Caco-2 (cell line): ENCODE measurements at regions of chr5 and their contacts with region 1.

Region 1: GRCh38 chr5:135308752-135309151 is 90.3 kb downstream of the MACROH2A1 start:
- DNase-seq: peak; percentile 91 to 95
- H3K4me3 ChIP-seq: no peak overlapping the region
- H3K4me3 Mint-ChIP-seq: peak overlapping the region; percentile 69
- H3K27ac Mint-ChIP-seq: peak overlapping the region; percentile 97
- H3K4me1 ChIP-seq: peaks cover 75% of the 10 kb centered on the region
- H3K4me1 Mint-ChIP-seq: peaks cover 76% of the 10 kb centered on the region
- H3K27me3 ChIP-seq: no peaks in the 10 kb centered on the region
- H3K27me3 Mint-ChIP-seq: no peaks in the 10 kb centered on the region
- CTCF ChIP-seq: no peak

Region 2: DNA sequence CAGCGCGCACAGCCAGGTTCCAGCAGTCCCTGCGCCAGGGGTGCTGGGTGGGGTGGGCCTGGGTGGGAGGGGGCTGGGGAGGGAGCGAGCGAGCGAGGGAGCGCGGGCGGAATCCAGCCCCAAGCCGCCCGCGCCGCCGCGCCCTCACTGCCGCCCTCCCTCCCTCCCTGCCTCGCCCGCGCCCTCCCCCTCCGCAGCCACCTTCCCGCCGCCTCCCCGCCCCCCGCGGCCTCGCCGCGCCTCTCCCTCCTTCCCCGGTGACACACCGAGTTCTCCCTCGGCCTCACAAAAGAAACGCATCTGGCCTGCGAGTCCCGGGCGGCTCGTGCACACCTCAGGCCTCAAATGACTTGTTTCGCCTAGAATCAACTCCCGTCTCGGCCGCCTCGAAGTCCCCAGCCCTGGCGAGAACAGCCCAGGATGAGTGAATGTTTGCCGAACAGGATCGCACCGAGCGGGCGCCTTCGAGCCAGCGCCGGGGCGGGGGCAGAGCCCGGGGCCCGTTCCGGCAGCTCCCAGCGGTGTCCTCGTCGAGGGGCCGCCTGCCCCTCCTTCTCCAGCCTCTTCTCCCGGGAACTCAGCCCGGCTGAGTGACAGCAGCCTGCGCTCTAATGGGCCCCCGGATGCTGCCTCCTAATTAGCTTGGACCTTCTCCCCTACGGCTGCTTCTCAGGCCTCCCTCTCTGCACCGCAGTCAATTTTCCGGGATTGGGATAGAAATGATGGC is 274.4 kb before region 1 on chr5:
- CTCF ChIA-PET with region 1: no interaction called
- POLR2A ChIA-PET with region 1: no interaction called
- intact Hi-C with region 1: loop called (anchors 10 kb)
- DNase-seq: peak; percentile 88 to 89
- H3K4me3 ChIP-seq: peak overlapping the region; percentile 83
- H3K4me3 Mint-ChIP-seq: peak overlapping the region; percentile 89
- H3K27ac Mint-ChIP-seq: peak overlapping the region; percentile 81
- H3K4me1 ChIP-seq: peaks cover 27% of the 10 kb centered on the region
- H3K4me1 Mint-ChIP-seq: peaks cover 31% of the 10 kb centered on the region
- H3K27me3 ChIP-seq: no peaks in the 10 kb centered on the region
- H3K27me3 Mint-ChIP-seq: no peaks in the 10 kb centered on the region
- CTCF ChIP-seq: no peak

Region 3: GRCh38 chr5:135139381-135140137 is 169.2 kb before region 1 on chr5:
- CTCF ChIA-PET with region 1: no interaction called
- POLR2A ChIA-PET with region 1: no interaction called
- intact Hi-C with region 1: loop called (anchors 10 kb)
- DNase-seq: peak; percentile 83 to 91
- H3K4me3 ChIP-seq: no peak overlapping the region
- H3K4me3 Mint-ChIP-seq: peak overlapping the region; percentile 55
- H3K27ac Mint-ChIP-seq: peak overlapping the region; percentile 75
- H3K4me1 ChIP-seq: peaks cover 76% of the 10 kb centered on the region
- H3K4me1 Mint-ChIP-seq: peaks cover 47% of the 10 kb centered on the region
- H3K27me3 ChIP-seq: no peaks in the 10 kb centered on the region
- H3K27me3 Mint-ChIP-seq: no peaks in the 10 kb centered on the region
- CTCF ChIP-seq: no peak

Region 4: GRCh38 chr5:135263022-135263668 is 45.6 kb before region 1 on chr5:
- CTCF ChIA-PET with region 1: no interaction called
- POLR2A ChIA-PET with region 1: interaction called, 3 read pairs
- intact Hi-C with region 1: loop called (anchors 1 kb)
- DNase-seq: peak; percentile 87 to 90
- H3K4me3 ChIP-seq: no peak overlapping the region
- H3K4me3 Mint-ChIP-seq: peak overlapping the region; percentile 46
- H3K27ac Mint-ChIP-seq: peak overlapping the region; percentile 56
- H3K4me1 ChIP-seq: peaks cover 36% of the 10 kb centered on the region
- H3K4me1 Mint-ChIP-seq: peaks cover 28% of the 10 kb centered on the region
- H3K27me3 ChIP-seq: no peaks in the 10 kb centered on the region
- H3K27me3 Mint-ChIP-seq: no peaks in the 10 kb centered on the region
- CTCF ChIP-seq: no peak

Region 5: DNA sequence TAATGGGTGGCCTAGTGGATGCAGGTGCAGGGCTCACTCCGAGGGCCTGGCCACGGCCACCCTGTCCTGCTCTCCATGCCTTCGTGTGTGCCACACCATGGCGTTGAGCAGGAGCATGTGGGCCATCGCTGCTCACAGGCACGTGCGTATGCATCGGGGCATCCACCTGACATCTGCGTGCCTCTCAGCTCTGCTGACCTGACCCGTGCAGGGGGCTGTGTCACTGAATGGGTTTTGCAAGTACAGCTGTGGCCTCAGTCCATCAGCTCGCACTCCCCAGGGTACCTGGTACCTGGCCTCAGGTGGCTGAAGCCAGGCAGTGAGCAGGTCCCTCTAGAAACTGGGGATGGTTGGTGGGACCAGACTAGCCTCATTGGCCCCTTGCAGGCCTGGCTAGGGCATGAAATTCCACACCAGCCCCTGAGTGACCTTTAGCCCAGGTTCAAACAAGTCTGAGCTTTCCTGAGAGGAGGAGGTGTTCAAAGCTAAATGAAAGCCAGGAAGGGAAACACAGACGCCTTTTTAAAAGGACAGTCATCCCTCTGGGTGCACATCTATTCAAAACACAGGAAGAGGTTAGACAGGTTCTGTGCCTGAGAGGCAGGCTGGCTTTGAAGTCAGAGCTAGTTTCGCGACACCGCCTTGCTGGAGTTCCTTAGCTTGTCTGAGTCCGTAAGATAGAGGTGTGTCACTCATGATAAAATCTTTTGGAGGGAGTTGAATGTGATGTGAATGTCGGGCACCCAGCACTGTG is 16.3 kb after region 1 on chr5:
- CTCF ChIA-PET with region 1: interaction called, 5 read pairs
- POLR2A ChIA-PET with region 1: interaction called, 3 read pairs
- intact Hi-C with region 1: loop called (anchors 1 kb)
- DNase-seq: peak; percentile 75 to 81
- H3K4me3 ChIP-seq: no peak overlapping the region
- H3K4me3 Mint-ChIP-seq: peak overlapping the region; percentile 7
- H3K27ac Mint-ChIP-seq: peak overlapping the region; percentile 43
- H3K4me1 ChIP-seq: peaks cover 37% of the 10 kb centered on the region
- H3K4me1 Mint-ChIP-seq: peaks cover 34% of the 10 kb centered on the region
- H3K27me3 ChIP-seq: no peaks in the 10 kb centered on the region
- H3K27me3 Mint-ChIP-seq: no peaks in the 10 kb centered on the region
- CTCF ChIP-seq: no peak